ENCODE measurements at regions of chr1 and their contacts with region 1.

Region 1: DNA sequence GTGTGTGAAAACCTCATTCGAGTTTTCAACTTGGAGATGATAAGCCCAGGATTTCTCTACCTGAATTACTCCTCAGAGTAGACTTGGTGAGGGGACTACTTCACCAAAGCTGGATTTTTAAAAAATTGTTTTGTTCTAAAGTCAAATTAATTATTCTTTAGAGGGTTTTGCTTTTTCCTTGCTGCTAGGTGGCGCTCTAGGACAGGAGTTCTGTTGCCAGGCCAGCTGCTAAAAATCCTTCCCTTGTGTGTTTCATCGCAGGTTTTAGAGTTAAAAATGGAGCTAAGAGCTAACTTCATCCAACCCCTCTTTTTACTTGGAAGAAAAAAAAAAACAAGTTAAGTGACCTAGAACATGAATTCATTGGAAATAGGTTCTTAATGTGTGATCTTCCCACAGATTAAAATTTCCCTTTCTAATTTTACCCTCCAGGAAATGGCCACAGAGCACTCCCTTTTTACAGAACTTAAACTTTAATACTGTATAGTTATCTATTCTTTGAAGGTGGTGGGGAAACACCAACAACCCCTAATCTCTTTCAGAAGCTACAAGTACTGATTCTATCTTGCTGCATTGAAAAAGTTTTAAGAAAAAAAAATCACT is 36.7 kb upstream of the FAM163A start:
- DNase-seq: peak; percentile 30 to 68
- ATAC-seq: peak; percentile 33 to 68; a peak in 3 of 6 replicates
- H3K4me3 ChIP-seq: no peak overlapping the region
- H3K27ac ChIP-seq: no peak overlapping the region
- H3K4me1 ChIP-seq: no peaks in the 10 kb centered on the region
- CTCF ChIP-seq: peak; percentile 97
- EP300 ChIP-seq: no peak
- POLR2A ChIP-seq: no peak
- RAD21 ChIP-seq: peak; percentile 94 to 95

Region 2: DNA sequence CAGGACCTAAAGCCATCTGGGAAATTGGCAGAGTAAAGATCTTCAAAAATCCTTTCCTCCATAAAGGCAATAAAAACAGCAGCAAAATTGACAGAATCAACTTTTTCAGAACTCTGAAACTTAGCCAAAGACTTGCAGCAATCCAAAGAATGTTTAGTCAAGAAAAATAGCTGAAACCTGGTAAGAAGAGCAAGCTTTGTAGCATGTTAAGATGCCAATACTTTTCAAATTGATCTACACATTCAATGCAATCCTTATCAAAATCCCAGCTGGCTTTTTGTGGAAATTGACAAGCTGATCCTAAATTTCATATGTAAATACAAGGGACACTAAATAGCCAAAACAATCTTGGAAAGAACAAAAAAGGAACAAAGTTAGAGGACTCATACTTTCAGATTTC is 12.8 kb after region 1 on chr1:
- CTCF ChIA-PET with region 1: interaction called, 12 read pairs
- POLR2A ChIA-PET with region 1: no interaction called
- DNase-seq: no peak
- ATAC-seq: no peak
- H3K4me3 ChIP-seq: no peak overlapping the region
- H3K27ac ChIP-seq: no peak overlapping the region
- H3K4me1 ChIP-seq: no peaks in the 10 kb centered on the region
- CTCF ChIP-seq: no peak
- EP300 ChIP-seq: no peak
- POLR2A ChIP-seq: no peak
- RAD21 ChIP-seq: no peak

Region 3: GRCh38 chr1:179728271-179728670 is 21.8 kb after region 1 on chr1:
- CTCF ChIA-PET with region 1: interaction called, 49 read pairs
- POLR2A ChIA-PET with region 1: no interaction called
- DNase-seq: no peak
- ATAC-seq: no peak
- H3K4me3 ChIP-seq: no peak overlapping the region
- H3K27ac ChIP-seq: no peak overlapping the region
- H3K4me1 ChIP-seq: no peaks in the 10 kb centered on the region
- CTCF ChIP-seq: no peak
- EP300 ChIP-seq: no peak
- POLR2A ChIP-seq: no peak
- RAD21 ChIP-seq: no peak

Region 4: DNA sequence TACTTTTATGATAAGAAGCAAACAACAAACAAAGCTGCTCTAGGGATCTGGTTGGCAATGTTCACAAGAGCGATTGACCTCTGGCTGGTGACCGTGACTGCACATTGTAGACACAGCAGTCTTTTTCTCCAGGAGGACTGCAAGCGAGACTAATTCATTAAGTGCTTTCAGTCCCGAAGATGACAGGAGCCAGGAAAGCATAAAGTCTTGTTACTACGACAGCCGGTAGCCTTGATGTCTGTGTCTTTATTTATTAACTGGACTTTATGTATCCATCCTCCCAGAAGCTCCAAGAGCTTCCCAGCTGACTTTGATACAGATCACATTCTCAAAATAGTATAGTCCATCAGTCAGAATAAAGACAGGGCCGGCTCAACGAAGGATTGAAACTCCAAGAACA is 54.9 kb after region 1 on chr1:
- CTCF ChIA-PET with region 1: interaction called, 24 read pairs
- POLR2A ChIA-PET with region 1: no interaction called
- DNase-seq: no peak
- ATAC-seq: no peak
- H3K4me3 ChIP-seq: no peak overlapping the region
- H3K27ac ChIP-seq: no peak overlapping the region
- H3K4me1 ChIP-seq: no peaks in the 10 kb centered on the region
- CTCF ChIP-seq: no peak
- EP300 ChIP-seq: no peak
- POLR2A ChIP-seq: no peak
- RAD21 ChIP-seq: no peak

Region 5: GRCh38 chr1:179794669-179795068 is 88.2 kb after region 1 on chr1:
- CTCF ChIA-PET with region 1: interaction called, 12 read pairs
- POLR2A ChIA-PET with region 1: no interaction called
- DNase-seq: no peak
- ATAC-seq: no peak
- H3K4me3 ChIP-seq: no peak overlapping the region
- H3K27ac ChIP-seq: no peak overlapping the region
- H3K4me1 ChIP-seq: no peaks in the 10 kb centered on the region
- CTCF ChIP-seq: no peak
- EP300 ChIP-seq: no peak
- POLR2A ChIP-seq: no peak
- RAD21 ChIP-seq: no peak

Region 6: GRCh38 chr1:179803104-179803503 is 96.7 kb after region 1 on chr1:
- CTCF ChIA-PET with region 1: interaction called, 644 read pairs
- POLR2A ChIA-PET with region 1: no interaction called
- DNase-seq: no peak
- ATAC-seq: no peak
- H3K4me3 ChIP-seq: no peak overlapping the region
- H3K27ac ChIP-seq: no peak overlapping the region
- H3K4me1 ChIP-seq: no peaks in the 10 kb centered on the region
- CTCF ChIP-seq: no peak
- EP300 ChIP-seq: no peak
- POLR2A ChIP-seq: no peak
- RAD21 ChIP-seq: no peak

Region 7: DNA sequence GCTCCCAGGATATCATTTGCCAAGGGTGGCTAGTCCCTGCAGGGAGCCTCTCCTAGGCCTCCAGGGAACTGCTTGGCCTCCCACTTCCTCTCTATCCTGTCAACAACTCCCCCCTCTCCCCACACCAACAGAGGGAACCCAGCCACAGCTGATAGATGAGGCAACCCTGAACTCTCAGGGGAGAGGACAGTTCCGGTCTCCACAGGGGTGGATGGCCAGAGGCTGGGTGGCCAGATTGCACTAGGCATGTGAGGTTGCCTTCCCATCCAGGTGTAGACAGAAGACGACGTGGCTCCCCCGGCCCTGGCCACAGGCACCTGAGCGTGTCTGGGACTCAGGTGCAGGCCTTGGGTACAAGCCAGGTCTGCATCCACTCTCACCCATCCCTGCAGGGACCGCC is 117.8 kb after region 1 on chr1:
- CTCF ChIA-PET with region 1: interaction called, 644 read pairs
- POLR2A ChIA-PET with region 1: no interaction called
- DNase-seq: no peak
- ATAC-seq: no peak
- H3K4me3 ChIP-seq: no peak overlapping the region
- H3K27ac ChIP-seq: no peak overlapping the region
- H3K4me1 ChIP-seq: no peaks in the 10 kb centered on the region
- CTCF ChIP-seq: no peak
- EP300 ChIP-seq: no peak
- POLR2A ChIP-seq: no peak
- RAD21 ChIP-seq: no peak

Measured in A549 (cell line).